Activated CD4-positive, alpha-beta T cell treated with anti-CD3 and anti-CD28 coated beads for 36 hours (primary cell): ENCODE measurements at regions of chr12 and their contacts with region 1.

Region 1: GRCh38 chr12:98653866-98654493 is 8.9 kb downstream of the APAF1 start:
- DNase-seq: no peak
- ATAC-seq: no peak
- H3K4me3 Mint-ChIP-seq: no peak overlapping the region
- H3K27ac Mint-ChIP-seq: no peak overlapping the region
- H3K4me1 Mint-ChIP-seq: peaks cover 18% of the 10 kb centered on the region
- H3K27me3 Mint-ChIP-seq: no peaks in the 10 kb centered on the region

Region 2: DNA sequence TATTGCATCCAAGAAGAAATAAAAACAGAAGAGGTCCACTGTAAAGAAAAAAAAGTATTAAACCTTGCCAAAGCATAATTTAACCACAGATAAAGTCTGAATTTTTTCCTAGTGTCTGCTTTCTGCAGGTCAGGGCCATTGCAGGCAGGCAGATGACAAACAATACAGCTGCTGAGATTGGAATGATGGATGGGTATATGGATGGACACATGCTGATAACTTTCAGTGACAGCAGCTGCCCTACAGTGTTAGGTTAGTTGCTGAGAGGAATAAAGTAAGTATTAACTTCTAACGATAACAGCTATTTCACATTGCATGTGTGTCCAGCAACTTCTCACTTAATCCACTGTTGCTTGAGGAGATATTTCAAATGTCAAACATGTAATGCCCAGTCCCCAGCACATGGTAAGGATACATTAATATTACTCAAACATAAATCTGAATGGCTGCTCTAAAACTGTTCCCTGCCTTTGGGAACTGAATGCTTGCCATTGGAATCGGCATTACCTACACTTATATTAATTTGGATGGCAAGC is 676.0 kb before region 1 on chr12:
- CTCF ChIA-PET with region 1: no interaction called
- POLR2A ChIA-PET with region 1: no interaction called
- intact Hi-C with region 1: no loop called
- DNase-seq: no peak
- ATAC-seq: no peak
- H3K4me3 Mint-ChIP-seq: no peak overlapping the region
- H3K27ac Mint-ChIP-seq: no peak overlapping the region
- H3K4me1 Mint-ChIP-seq: no peaks in the 10 kb centered on the region
- H3K27me3 Mint-ChIP-seq: peaks cover 3% of the 10 kb centered on the region

Region 3: DNA sequence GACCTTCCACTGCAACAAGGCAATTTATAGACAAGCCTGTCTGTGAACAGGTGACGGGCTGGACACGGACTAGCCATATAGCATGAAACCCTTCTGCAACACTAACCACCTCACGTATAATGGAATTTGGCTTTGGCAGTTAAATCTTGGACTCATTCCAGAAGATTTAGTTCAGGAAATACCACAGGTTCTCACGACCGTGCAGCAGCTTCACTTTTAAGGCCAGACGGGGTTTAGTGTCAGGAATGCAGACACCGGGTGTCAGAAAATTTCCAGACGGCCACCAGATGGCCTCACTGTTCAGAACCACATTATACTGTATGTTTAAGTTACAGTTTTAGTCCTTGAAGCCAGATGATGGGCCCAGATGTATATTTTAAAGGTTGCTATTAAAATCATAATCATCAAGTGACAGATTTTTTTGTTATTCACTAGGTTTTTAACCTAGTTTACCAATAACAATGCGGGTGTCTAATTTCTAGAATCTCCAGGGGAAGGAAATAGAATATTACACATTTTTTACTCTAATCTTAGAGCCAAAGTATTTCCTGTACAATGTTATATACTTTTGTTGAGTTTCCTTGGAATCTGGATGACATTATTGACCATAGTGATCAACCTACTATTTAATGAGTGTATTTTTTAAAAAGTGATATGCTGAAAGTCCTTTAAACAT is 229.1 kb before region 1 on chr12:
- CTCF ChIA-PET with region 1: no interaction called
- POLR2A ChIA-PET with region 1: no interaction called
- intact Hi-C with region 1: loop called (anchors 2 to 5 kb)
- DNase-seq: peak; percentile 75
- ATAC-seq: peak; percentile 88
- H3K4me3 Mint-ChIP-seq: no peak overlapping the region
- H3K27ac Mint-ChIP-seq: no peak overlapping the region
- H3K4me1 Mint-ChIP-seq: no peaks in the 10 kb centered on the region
- H3K27me3 Mint-ChIP-seq: peaks cover 1% of the 10 kb centered on the region

Region 4: GRCh38 chr12:98561846-98562245 is 92.1 kb before region 1 on chr12:
- CTCF ChIA-PET with region 1: interaction called, 12 read pairs
- POLR2A ChIA-PET with region 1: no interaction called
- intact Hi-C with region 1: loop called (anchors 1 kb)
- DNase-seq: no peak
- ATAC-seq: no peak
- H3K4me3 Mint-ChIP-seq: no peak overlapping the region
- H3K27ac Mint-ChIP-seq: no peak overlapping the region
- H3K4me1 Mint-ChIP-seq: peaks cover under 1% of the 10 kb centered on the region
- H3K27me3 Mint-ChIP-seq: no peaks in the 10 kb centered on the region

Region 5: DNA sequence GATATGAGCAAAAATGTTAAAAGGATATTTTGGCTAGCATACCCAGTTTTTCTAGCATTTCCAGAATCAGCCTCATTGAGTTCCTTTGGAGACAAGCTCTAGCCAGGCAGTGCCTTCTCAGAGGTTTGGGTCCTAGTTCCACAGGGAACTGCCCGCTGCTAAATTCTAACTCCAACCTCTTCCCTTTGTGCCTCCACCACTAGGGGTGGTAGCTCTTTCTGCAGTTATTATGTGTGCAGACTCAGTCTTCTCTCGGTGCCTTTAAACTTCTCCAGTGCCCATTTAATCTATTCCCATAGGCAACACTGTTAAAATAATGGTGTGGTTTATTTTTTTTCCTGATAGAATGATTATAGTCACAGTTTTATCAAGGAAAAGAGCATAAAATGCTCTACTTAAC is 82.0 kb before region 1 on chr12:
- CTCF ChIA-PET with region 1: interaction called, 12 read pairs
- POLR2A ChIA-PET with region 1: interaction called, 6 read pairs
- intact Hi-C with region 1: loop called in 1 of 2 experiments (anchors 1 kb)
- DNase-seq: no peak
- ATAC-seq: no peak
- H3K4me3 Mint-ChIP-seq: no peak overlapping the region
- H3K27ac Mint-ChIP-seq: no peak overlapping the region
- H3K4me1 Mint-ChIP-seq: peaks cover under 1% of the 10 kb centered on the region
- H3K27me3 Mint-ChIP-seq: no peaks in the 10 kb centered on the region

Region 6: GRCh38 chr12:98612696-98613334 is 41.2 kb before region 1 on chr12:
- CTCF ChIA-PET with region 1: no interaction called
- POLR2A ChIA-PET with region 1: no interaction called
- intact Hi-C with region 1: no loop called
- DNase-seq: no peak
- ATAC-seq: peak; percentile 51
- H3K4me3 Mint-ChIP-seq: no peak overlapping the region
- H3K27ac Mint-ChIP-seq: no peak overlapping the region
- H3K4me1 Mint-ChIP-seq: no peaks in the 10 kb centered on the region
- H3K27me3 Mint-ChIP-seq: no peaks in the 10 kb centered on the region